Astrocyte of the cerebellum (primary cell): ENCODE measurements at regions of chr12 and their contacts with region 1.

Region 1: DNA sequence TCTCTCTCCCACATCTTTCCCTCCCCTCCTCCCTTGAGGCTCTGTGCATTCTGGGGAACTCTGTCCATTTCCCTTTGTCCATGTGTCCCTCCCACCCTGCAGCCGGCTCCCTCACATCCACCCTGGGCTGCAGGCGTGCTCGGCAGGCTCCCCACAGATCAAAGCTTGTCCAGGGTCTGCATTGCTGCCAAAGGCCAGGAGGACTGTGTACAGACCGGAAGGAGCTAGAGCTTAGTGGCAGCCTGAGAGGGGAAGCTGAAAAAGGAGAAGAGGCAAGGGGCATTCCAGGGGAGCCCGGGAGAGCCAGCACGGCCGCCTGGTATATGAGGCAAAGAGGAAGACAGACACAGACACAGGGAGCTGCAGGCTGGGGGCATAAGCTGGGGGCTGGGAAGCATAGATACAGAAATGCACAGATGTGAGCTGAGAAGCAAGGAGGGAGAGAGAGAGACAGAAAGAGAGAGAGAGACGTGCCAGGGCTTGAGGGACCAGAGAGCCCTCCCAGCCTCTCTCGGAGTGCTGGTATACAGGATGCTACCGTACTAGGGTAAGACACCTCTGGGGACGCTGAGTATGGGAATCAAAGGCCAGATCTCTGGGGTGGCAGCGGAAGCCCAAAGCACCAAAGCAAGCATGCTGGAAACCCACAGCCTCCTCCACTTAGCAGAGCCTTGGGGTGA is 3.3 kb downstream of the CD4 start:
- DNase-seq: no peak
- H3K4me3 ChIP-seq: no peak overlapping the region
- CTCF ChIP-seq: no peak

Region 2: DNA sequence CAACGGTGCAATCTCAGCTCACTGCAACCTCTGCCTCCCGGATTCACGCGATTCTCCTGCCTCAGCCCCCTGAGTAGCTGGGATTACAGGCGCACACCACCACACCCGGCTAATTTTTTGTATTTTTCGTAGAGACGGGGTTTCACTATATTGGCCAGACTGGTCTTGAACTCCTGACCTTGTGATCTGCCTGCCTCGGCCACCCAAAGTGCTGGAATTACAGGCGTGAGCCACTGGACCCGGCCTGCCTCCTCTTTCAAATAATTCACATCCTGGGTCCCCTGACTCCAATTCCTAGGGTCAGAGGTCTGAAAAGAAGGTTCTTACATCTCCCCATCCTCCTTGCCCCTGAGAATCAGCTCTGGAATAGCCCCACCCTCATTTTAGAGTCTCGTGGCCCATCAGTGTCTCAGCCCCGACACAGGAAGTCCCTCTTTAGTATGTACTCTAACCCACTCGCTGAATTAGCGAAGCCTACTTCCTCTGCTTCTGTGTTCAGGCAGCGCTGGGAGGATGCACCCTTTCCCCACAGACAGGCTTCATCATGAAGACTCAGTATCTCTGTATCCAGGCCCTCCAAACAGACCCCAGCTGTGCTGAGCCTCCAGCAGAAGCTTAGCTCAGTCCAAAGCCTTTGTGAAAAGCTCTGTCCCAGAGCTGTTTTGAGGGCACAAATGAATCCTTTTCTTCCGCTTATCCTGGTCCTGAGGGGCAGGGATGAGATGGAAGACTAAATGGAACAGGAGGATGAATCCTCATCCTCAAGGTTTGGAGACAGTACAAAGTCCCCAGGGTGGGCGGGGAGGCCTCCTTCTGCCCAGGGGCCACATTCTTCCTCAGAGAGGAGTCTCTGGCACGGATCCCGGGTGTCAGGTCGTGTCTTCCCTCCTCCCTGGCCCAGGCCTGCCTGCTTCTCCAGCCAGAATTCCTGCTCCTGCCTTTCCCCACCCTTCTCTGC is 160.4 kb before region 1 on chr12:
- in situ Hi-C with region 1: loop called (anchors 10 kb)
- DNase-seq: no peak
- H3K4me3 ChIP-seq: no peak overlapping the region
- CTCF ChIP-seq: no peak

Region 3: GRCh38 chr12:6730169-6730568 is 62.5 kb before region 1 on chr12:
- in situ Hi-C with region 1: loop called (anchors 5 kb)
- DNase-seq: no peak
- H3K4me3 ChIP-seq: no peak overlapping the region
- CTCF ChIP-seq: no peak

Region 4: GRCh38 chr12:6752921-6753771 is 39.5 kb before region 1 on chr12 and contains the start of gene MLF2:
- in situ Hi-C with region 1: no loop called
- DNase-seq: peak; percentile 98
- H3K4me3 ChIP-seq: peak within 1 kb of the TSS; percentile 96
- CTCF ChIP-seq: peak; percentile 98